ENCODE measurements at regions of chr5 and their contacts with region 1.

Region 1: DNA sequence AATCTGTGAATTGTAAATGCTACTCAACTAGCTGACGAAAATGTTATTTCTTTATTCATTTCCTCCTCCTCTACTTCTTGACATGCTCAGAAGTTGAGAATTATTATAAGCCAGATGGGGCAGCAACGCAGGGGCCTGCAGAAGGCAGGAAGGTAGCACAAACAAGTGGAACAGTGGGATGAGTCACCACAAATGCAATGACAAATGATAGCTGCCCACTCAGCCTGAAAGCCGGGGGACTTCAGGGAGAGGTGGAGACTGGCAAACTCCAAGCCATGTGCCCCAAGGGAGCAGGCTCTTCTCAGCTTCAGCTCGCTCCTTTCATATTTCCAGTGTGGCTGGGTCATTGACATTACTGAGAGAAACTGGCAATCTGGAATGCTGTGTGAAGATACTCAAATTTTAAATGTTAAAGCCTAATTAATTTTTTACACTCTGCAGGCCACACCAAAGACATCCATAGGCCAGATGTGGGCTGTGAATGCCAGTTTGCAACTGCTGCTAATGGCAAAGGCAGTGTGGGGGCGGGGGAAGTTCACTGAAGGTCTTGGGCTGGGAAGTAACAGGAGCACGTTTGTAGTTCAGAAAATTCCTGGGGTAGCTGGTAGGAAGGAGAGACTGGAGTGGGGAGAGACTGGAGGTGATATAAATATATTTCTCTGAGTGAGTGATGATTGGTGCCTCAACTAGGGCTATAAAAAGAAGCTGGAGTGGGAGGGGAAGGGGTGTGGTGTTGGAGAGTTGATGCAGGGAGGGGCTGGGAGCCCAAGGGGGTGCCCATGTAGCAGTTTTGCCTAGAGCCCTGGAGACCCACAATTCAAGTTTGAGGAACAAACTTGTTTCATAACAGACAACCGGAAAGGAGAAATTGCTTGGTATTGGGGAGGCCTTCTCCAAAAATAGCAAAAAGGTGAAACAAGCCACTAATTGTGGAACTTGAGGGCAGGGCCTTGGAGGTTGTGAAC is 20.8 kb upstream of the ADRB2 start:
- DNase-seq: peak; percentile 42
- ATAC-seq: no peak
- H3K4me3 ChIP-seq: peak overlapping the region in 1 of 5 experiments; percentile 6
- H3K4me3 Mint-ChIP-seq: peak overlapping the region; percentile 51
- H3K27ac ChIP-seq: peak overlapping the region; percentile 40 to 59
- H3K27ac Mint-ChIP-seq: peak overlapping the region; percentile 76
- H3K4me1 ChIP-seq: peaks cover 48 to 58% of the 10 kb centered on the region in 2 donors
- H3K4me1 Mint-ChIP-seq: peaks cover 52% of the 10 kb centered on the region
- H3K27me3 ChIP-seq: no peaks in the 10 kb centered on the region
- H3K27me3 Mint-ChIP-seq: no peaks in the 10 kb centered on the region
- CTCF ChIP-seq: no peak

Region 2: GRCh38 chr5:148740966-148741742 is 64.5 kb before region 1 on chr5:
- CTCF ChIA-PET with region 1: interaction called, 21 read pairs
- POLR2A ChIA-PET with region 1: no interaction called
- intact Hi-C with region 1: loop called (anchors 5 kb)
- DNase-seq: peak; percentile 72
- ATAC-seq: peak; percentile 28
- H3K4me3 ChIP-seq: no peak overlapping the region
- H3K4me3 Mint-ChIP-seq: no peak overlapping the region
- H3K27ac ChIP-seq: no peak overlapping the region
- H3K27ac Mint-ChIP-seq: no peak overlapping the region
- H3K4me1 ChIP-seq: peaks cover 0 to 3% of the 10 kb centered on the region in 2 donors
- H3K4me1 Mint-ChIP-seq: peaks cover 10% of the 10 kb centered on the region
- H3K27me3 ChIP-seq: no peaks in the 10 kb centered on the region
- H3K27me3 Mint-ChIP-seq: peaks cover 4% of the 10 kb centered on the region
- CTCF ChIP-seq: peak; percentile 87

Region 3: DNA sequence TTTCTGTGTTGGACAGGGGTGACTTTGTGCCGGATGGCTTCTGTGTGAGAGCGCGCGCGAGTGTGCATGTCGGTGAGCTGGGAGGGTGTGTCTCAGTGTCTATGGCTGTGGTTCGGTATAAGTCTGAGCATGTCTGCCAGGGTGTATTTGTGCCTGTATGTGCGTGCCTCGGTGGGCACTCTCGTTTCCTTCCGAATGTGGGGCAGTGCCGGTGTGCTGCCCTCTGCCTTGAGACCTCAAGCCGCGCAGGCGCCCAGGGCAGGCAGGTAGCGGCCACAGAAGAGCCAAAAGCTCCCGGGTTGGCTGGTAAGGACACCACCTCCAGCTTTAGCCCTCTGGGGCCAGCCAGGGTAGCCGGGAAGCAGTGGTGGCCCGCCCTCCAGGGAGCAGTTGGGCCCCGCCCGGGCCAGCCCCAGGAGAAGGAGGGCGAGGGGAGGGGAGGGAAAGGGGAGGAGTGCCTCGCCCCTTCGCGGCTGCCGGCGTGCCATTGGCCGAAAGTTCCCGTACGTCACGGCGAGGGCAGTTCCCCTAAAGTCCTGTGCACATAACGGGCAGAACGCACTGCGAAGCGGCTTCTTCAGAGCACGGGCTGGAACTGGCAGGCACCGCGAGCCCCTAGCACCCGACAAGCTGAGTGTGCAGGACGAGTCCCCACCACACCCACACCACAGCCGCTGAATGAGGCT is 20.6 kb after region 1 on chr5 and contains the start of gene ADRB2:
- CTCF ChIA-PET with region 1: interaction called, 46 read pairs
- POLR2A ChIA-PET with region 1: interaction called, 3 read pairs
- intact Hi-C with region 1: loop called (anchors 1 kb)
- DNase-seq: peak; percentile 94
- ATAC-seq: peak; percentile 89
- H3K4me3 ChIP-seq: peak within 1 kb of the TSS; percentile 61 to 91 (median 86)
- H3K4me3 Mint-ChIP-seq: peak within 1 kb of the TSS; percentile 94
- H3K27ac ChIP-seq: peak within 1 kb of the TSS; percentile 76 to 91
- H3K27ac Mint-ChIP-seq: peak within 1 kb of the TSS; percentile 94
- H3K4me1 ChIP-seq: peaks cover 54 to 57% of the 10 kb centered on the region in 2 donors
- H3K4me1 Mint-ChIP-seq: peaks cover 74% of the 10 kb centered on the region
- H3K27me3 ChIP-seq: no peaks in the 10 kb centered on the region
- H3K27me3 Mint-ChIP-seq: no peaks in the 10 kb centered on the region
- CTCF ChIP-seq: no peak
- total RNA-seq, gene ADRB2: 11.4 and 12.4 TPM in 2 replicates

Region 4: DNA sequence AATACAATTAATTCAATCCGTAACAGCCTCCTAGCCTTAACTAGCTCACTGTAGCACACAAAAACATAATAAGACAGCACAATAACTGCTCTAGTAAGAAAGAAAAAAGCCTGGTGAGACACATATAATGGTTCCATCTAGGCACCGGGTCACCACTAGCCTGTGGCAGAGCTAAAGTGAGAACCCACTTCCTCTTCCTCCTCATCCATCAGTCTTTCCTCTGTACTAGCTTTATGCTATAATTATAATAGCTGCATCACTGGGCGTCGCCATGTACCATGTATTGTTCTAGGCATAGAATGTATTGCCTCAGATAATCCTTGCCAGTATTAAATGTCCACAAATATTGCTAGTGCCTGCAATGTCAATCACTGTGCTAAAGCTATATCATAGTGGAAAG is 43.9 kb after region 1 on chr5:
- CTCF ChIA-PET with region 1: interaction called, 3 read pairs
- POLR2A ChIA-PET with region 1: no interaction called
- intact Hi-C with region 1: loop called (anchors 5 kb)
- DNase-seq: peak; percentile 32
- ATAC-seq: peak; percentile 70
- H3K4me3 ChIP-seq: peak overlapping the region in 1 of 5 experiments; percentile 11
- H3K4me3 Mint-ChIP-seq: peak overlapping the region; percentile 3
- H3K27ac ChIP-seq: peak overlapping the region; percentile 9 to 29
- H3K27ac Mint-ChIP-seq: peak overlapping the region; percentile 7
- H3K4me1 ChIP-seq: peaks cover 23 to 32% of the 10 kb centered on the region in 2 donors
- H3K4me1 Mint-ChIP-seq: peaks cover 22% of the 10 kb centered on the region
- H3K27me3 ChIP-seq: no peaks in the 10 kb centered on the region
- H3K27me3 Mint-ChIP-seq: no peaks in the 10 kb centered on the region
- CTCF ChIP-seq: no peak

Region 5: GRCh38 chr5:148937239-148937638 is 131.6 kb after region 1 on chr5:
- CTCF ChIA-PET with region 1: no interaction called
- POLR2A ChIA-PET with region 1: no interaction called
- intact Hi-C with region 1: no loop called
- DNase-seq: no peak
- ATAC-seq: no peak
- H3K4me3 ChIP-seq: no peak overlapping the region
- H3K4me3 Mint-ChIP-seq: no peak overlapping the region
- H3K27ac ChIP-seq: no peak overlapping the region
- H3K27ac Mint-ChIP-seq: no peak overlapping the region
- H3K4me1 ChIP-seq: no peaks in the 10 kb centered on the region
- H3K4me1 Mint-ChIP-seq: peaks cover 2% of the 10 kb centered on the region
- H3K27me3 ChIP-seq: peaks cover 0 to 4% (median 0%) of the 10 kb centered on the region in 4 experiments
- H3K27me3 Mint-ChIP-seq: peaks cover 11% of the 10 kb centered on the region
- CTCF ChIP-seq: no peak

Measured in B cell (primary cell).